AG04450 (cell line): ENCODE measurements at regions of chr1 and their contacts with region 1.

Region 1: GRCh38 chr1:153572569-153573015 is 6.9 kb upstream of the S100A2 start:
- DNase-seq: no peak
- H3K4me3 ChIP-seq: peak overlapping the region; percentile 18; the same call in 1 of the 2 replicates
- H3K27ac ChIP-seq: peak overlapping the region; percentile 77
- H3K27me3 ChIP-seq: no peaks in the 10 kb centered on the region
- CTCF ChIP-seq: peak; percentile 89

Region 2: GRCh38 chr1:153456396-153456795 is 116.2 kb before region 1 on chr1:
- CTCF ChIA-PET with region 1: no interaction called
- POLR2A ChIA-PET with region 1: no interaction called
- DNase-seq: no peak
- H3K4me3 ChIP-seq: no peak overlapping the region
- H3K27ac ChIP-seq: no peak overlapping the region
- H3K27me3 ChIP-seq: peaks cover 2% of the 10 kb centered on the region
- CTCF ChIP-seq: no peak

Region 3: DNA sequence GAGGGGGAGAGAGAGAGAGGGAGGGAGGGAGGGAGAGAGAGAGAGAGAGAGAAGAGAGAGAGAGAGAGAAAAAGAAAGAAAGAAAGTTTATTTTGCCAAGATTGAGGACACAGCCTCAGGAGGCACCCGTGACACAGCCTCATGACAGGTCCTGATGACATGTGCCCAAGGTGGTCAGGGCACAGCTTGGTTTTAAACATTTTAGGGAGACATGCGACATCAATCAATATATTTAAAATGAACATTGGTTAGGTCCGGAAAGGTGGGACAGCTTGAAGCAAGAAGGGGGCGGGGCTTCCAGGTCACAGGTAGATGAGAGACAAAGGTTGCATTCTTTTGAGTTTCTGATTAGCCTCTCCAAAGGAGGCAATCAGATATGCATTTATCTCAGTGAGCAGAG is 52.4 kb before region 1 on chr1:
- CTCF ChIA-PET with region 1: interaction called, 16 read pairs
- POLR2A ChIA-PET with region 1: no interaction called
- DNase-seq: no peak
- H3K4me3 ChIP-seq: no peak overlapping the region
- H3K27ac ChIP-seq: no peak overlapping the region
- H3K27me3 ChIP-seq: no peaks in the 10 kb centered on the region
- CTCF ChIP-seq: no peak

Region 4: DNA sequence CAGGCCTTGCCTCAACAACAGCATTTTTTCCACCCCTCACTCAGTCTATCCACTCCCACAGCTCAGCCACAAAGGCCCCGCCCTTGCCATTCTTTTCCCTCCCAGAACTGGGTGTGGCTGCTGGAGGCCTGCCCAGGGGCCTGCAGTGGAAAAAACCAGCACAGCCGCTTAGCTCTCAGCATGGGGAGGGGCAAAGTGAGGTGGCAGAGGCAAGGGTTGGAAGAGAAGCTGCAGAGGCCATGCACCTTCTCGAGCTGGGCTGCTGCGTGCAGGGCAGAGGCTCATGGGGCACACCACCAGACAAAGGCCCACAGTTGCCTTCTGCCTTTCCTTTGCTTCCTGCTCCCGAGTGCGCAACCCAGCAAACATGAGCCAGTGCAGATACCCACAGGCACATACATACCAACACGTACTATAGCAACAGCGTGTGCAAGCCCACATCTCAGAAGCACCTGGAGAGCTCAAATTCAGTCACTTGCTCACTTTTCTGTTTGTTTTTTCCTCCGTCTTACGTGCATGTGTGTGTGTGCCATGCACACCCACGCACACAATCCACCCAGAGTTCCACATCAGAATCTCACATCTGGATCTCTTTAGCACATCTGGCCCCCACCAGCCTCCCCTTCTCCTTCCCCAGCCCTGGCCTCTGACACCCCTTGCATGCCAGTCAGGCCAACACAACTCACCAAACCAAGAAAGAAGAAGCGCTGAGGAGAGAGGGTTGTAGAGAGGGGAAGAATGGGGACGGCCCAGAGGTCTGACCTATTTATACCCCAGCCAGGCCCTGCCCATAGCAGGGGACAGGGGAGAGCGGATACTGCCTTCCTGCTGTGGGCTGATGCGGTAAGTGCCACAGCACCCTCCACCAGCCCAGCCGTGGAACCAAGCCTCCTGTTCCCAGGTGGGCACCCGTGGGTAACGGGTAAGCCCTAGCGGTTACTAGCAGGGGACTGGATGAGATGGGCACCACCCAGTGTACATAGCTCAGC is 27.2 kb before region 1 on chr1 and contains the start of gene S100A4:
- CTCF ChIA-PET with region 1: interaction called, 20 read pairs
- POLR2A ChIA-PET with region 1: interaction called, 4 read pairs
- DNase-seq: peak; percentile 71
- H3K4me3 ChIP-seq: peak within 1 kb of the TSS; percentile 31; the same call in 1 of the 2 replicates
- H3K27ac ChIP-seq: peak within 1 kb of the TSS; percentile 80
- H3K27me3 ChIP-seq: no peaks in the 10 kb centered on the region
- CTCF ChIP-seq: no peak
- polyA plus RNA-seq, gene S100A4: 20.0 and 20.7 TPM in 2 replicates

Region 5: GRCh38 chr1:153592748-153593147 is 20.2 kb after region 1 on chr1:
- CTCF ChIA-PET with region 1: interaction called, 19 read pairs
- POLR2A ChIA-PET with region 1: interaction called, 3 read pairs
- DNase-seq: no peak
- H3K4me3 ChIP-seq: no peak overlapping the region
- H3K27ac ChIP-seq: no peak overlapping the region
- H3K27me3 ChIP-seq: no peaks in the 10 kb centered on the region
- CTCF ChIP-seq: no peak

Region 6: GRCh38 chr1:153626922-153627796 is 54.6 kb after region 1 on chr1 and contains the start of gene S100A13:
- CTCF ChIA-PET with region 1: interaction called, 74 read pairs
- POLR2A ChIA-PET with region 1: interaction called, 12 read pairs
- DNase-seq: peak; percentile 92
- H3K4me3 ChIP-seq: peak within 1 kb of the TSS; percentile 80
- H3K27ac ChIP-seq: peak within 1 kb of the TSS; percentile 92
- H3K27me3 ChIP-seq: no peaks in the 10 kb centered on the region
- CTCF ChIP-seq: peak; percentile 78
- polyA plus RNA-seq, gene S100A13: 310 and 323 TPM in 2 replicates

Region 7: GRCh38 chr1:153749408-153750005 is 176.9 kb after region 1 on chr1:
- CTCF ChIA-PET with region 1: interaction called, 12 read pairs
- POLR2A ChIA-PET with region 1: no interaction called
- DNase-seq: peak; percentile 67
- H3K4me3 ChIP-seq: no peak overlapping the region
- H3K27ac ChIP-seq: no peak overlapping the region
- H3K27me3 ChIP-seq: no peaks in the 10 kb centered on the region
- CTCF ChIP-seq: peak; percentile 96